Aorta (tissue), 5 donors: ENCODE measurements at regions of chr12 and their contacts with region 1.

Region 1: GRCh38 chr12:110338754-110339153 is 57.7 kb downstream of the ATP2A2 start:
- DNase-seq: no peak
- ATAC-seq: no peak
- H3K4me3 ChIP-seq: no peak overlapping the region
- H3K27ac ChIP-seq: no peak overlapping the region
- H3K4me1 ChIP-seq: no peaks in the 10 kb centered on the region
- H3K27me3 ChIP-seq: no peaks in the 10 kb centered on the region

Region 2: GRCh38 chr12:109264095-109264942 is 1074.4 kb before region 1 on chr12:
- intact Hi-C with region 1: no loop called
- DNase-seq: peak; percentile 74 to 88
- ATAC-seq: peak; percentile 77
- H3K4me3 ChIP-seq: no peak overlapping the region
- H3K27ac ChIP-seq: no peak overlapping the region
- H3K4me1 ChIP-seq: no peaks in the 10 kb centered on the region
- H3K27me3 ChIP-seq: no peaks in the 10 kb centered on the region

Region 3: DNA sequence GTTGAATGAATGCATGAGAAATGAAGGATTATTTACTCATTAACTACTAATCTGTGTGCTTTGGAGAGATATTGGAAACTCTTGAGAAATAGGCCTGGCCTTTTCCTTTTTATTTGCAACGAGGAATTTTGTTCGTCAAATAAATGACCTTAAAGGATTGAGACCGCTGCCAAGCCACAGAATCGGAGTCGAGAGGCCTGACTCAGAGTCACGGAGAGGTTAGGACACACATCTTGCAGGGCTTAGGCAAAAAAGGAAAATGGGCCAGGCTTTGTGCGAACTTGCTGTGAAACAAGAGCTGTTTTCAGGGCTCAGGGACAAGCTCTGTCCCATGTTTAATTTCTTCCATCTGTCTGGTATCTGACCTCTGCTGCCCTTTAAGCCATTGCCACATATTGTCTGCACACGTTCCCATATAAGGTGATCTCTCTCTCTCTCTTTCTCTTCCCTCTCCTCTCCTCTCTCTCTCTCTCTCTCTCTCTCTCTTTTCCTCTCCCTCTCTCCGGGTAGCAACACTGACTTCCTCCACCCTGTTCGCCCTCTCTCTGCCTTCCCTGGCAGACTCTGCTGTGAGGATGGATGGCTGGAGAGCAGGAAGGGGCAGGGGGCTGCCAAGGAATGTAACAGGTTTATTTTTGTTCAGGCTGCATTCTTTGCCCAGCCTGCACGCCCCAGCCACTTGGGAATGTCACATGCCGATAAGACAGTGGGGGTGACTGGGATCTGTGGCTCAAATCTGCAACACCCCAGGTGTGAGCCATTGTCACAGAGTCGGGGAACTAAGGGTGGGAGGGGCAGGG is 229.5 kb before region 1 on chr12:
- intact Hi-C with region 1: no loop called
- DNase-seq: peak; percentile 88 to 89
- ATAC-seq: peak; percentile 92
- H3K4me3 ChIP-seq: no peak overlapping the region
- H3K27ac ChIP-seq: peak overlapping the region; percentile 60 to 98
- H3K4me1 ChIP-seq: peaks cover 0 to 2% of the 10 kb centered on the region in 2 donors
- H3K27me3 ChIP-seq: no peaks in the 10 kb centered on the region

Region 4: GRCh38 chr12:110304061-110304551 is 34.6 kb before region 1 on chr12:
- intact Hi-C with region 1: loop called in 1 of 2 experiments (anchors 5 kb)
- DNase-seq: no peak
- ATAC-seq: no peak
- H3K4me3 ChIP-seq: no peak overlapping the region
- H3K27ac ChIP-seq: no peak overlapping the region
- H3K4me1 ChIP-seq: peaks cover 4 to 7% of the 10 kb centered on the region in 2 donors
- H3K27me3 ChIP-seq: no peaks in the 10 kb centered on the region